Spleen (tissue), 13 donors: ENCODE measurements at regions of chr7 and their contacts with region 1.

Region 1: DNA sequence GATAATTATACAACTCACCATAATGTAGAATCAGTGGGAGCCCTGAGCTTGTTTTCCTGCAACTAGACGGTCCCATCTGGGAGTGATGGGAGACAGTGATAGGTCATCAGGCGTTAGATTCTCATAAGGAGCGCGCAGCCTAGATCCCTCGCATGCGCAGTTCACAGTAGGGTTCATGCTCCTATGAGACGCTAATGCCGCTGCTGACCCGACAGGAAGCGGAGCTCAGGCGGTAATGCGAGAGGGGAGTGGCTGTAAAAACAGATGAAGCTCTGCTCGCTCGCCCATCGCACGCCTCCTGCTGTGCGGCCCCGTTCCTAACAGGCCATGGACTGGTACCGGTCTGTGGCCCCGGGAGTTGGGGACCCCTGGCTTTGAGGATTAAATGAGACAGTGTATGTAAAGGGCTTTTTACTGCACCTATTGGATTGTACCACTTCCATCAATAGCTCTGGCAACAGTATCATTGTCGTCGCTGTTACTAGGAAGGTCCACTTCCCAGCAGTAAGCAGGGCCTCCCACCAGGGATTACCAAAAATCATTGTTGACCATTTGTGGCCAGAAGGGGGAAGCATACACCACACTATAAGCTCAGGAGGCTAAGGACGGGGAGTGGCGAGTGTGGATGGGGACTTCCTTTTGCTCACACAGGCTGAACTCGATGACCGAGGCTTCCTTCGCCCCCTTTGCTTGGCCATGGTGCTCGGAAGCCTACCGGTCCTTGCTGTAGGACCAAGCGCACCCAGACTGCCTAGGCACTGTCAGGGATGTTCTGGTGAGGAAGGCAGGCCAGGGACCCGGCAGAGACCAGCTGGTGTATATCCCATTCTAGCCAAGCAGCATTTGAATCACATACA is 26.4 kb downstream of the AKR1B1 start:
- DNase-seq: peak; percentile 93
- H3K4me3 ChIP-seq: peak overlapping the region in 7 of 8 donors; percentile 18 to 66 (median 26)
- H3K27ac ChIP-seq: peak overlapping the region; percentile 63 to 89 (median 82)
- H3K4me1 ChIP-seq: peaks cover 5 to 24% (median 17%) of the 10 kb centered on the region in 6 donors
- H3K27me3 ChIP-seq: no peaks in the 10 kb centered on the region
- CTCF ChIP-seq: peak; percentile 69 to 96 (median 81)
- POLR2A ChIP-seq: peak in 1 of 3 donors; percentile 30

Region 2: DNA sequence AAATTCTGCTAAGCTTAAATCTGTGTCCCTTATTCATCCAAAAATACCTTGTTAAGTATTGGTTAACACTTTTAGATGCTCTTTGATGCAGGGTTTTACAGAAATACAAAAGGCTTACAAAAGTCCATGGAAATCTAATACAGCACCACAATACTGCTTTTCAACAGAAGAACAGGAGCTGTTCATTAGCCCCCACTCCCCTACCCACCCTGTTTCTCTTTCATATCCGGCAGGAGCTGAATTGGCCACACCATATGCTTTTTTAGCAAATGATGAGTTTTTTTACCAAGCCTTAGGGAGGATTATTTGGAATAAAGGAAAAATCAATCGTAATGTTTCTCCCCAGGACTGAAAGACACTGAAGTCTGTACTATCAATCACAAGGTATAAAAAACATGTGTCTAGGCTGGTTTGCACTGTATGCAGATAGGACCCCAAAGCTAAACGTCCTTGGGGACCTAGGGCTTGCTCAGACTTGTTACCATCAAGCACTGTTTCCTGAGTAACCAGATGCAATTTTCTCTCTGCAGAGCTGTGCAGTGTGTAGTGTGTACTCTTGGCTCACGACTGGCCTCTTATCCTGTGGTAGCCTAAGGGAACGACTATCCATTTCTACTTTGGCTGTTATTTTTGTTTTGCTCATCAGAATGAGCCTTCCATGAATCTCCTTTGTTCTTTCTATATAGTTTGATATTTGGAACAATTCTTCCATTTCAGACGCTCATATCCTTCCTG is 448.7 kb before region 1 on chr7:
- intact Hi-C with region 1: no loop called
- DNase-seq: no peak
- H3K4me3 ChIP-seq: no peak overlapping the region
- H3K27ac ChIP-seq: no peak overlapping the region
- H3K4me1 ChIP-seq: no peaks in the 10 kb centered on the region
- H3K27me3 ChIP-seq: no peaks in the 10 kb centered on the region
- CTCF ChIP-seq: no peak
- POLR2A ChIP-seq: no peak

Region 3: GRCh38 chr7:134547397-134548054 is 115.0 kb after region 1 on chr7:
- intact Hi-C with region 1: loop called (anchors 5 kb)
- DNase-seq: peak; percentile 83
- H3K4me3 ChIP-seq: peak overlapping the region in 4 of 8 donors; percentile 0 to 55 (median 16)
- H3K27ac ChIP-seq: no peak overlapping the region
- H3K4me1 ChIP-seq: peaks cover 0 to 7% (median 6%) of the 10 kb centered on the region in 6 donors
- H3K27me3 ChIP-seq: peaks cover 0 to 19% (median 0%) of the 10 kb centered on the region in 7 donors
- CTCF ChIP-seq: peak in 10 of 11 experiments; percentile 38 to 86 (median 79)
- POLR2A ChIP-seq: no peak

Region 4: GRCh38 chr7:134605973-134606923 is 173.7 kb after region 1 on chr7:
- intact Hi-C with region 1: loop called (anchors 5 kb)
- DNase-seq: peak; percentile 81
- H3K4me3 ChIP-seq: no peak overlapping the region
- H3K27ac ChIP-seq: no peak overlapping the region
- H3K4me1 ChIP-seq: peaks cover 0 to 31% (median 9%) of the 10 kb centered on the region in 6 donors
- H3K27me3 ChIP-seq: peaks cover 0 to 40% (median 0%) of the 10 kb centered on the region in 7 donors
- CTCF ChIP-seq: peak; percentile 57 to 91 (median 80)
- POLR2A ChIP-seq: no peak